H1 (cell line): ENCODE measurements at regions of chr7 and their contacts with region 1.

Region 1: DNA sequence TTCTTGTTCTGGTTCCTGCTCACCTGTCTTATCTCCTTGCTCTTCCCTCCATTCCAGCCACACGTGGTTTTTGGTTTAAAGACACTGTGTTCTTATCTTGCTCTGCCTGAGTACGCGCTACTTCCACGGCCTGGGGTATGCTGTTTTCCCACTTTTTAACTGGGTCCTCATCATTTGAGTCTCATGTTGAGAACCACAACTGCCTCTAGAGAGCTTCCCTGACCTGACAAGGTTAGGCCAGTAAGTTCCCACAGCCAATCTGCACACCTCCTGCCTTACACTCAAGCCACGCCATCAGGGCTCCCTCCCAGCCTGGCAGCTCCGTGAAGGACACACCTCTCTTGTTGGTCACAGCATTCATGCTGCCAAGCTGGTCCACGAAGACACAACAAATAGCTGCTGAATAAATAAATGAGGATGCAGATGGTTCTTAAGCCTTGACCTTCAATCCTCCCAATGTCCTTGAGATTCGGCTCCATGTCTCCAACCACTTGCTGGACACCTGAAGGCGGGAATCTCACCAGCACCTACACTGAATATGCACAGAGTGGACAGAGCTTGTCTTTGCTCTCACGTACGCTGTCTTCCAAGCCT is 201.7 kb upstream of the KLF14 start:
- DNase-seq: no peak
- H3K4me3 ChIP-seq: no peak overlapping the region
- H3K27ac ChIP-seq: no peak overlapping the region
- H3K4me1 ChIP-seq: peaks cover 0 to 8% (median 0%) of the 10 kb centered on the region in 4 experiments; a peak in 2 of 7 replicates
- H3K27me3 ChIP-seq: no peaks in the 10 kb centered on the region
- CTCF ChIP-seq: no peak
- EP300 ChIP-seq: no peak
- POLR2A ChIP-seq: no peak
- RAD21 ChIP-seq: no peak

Region 2: DNA sequence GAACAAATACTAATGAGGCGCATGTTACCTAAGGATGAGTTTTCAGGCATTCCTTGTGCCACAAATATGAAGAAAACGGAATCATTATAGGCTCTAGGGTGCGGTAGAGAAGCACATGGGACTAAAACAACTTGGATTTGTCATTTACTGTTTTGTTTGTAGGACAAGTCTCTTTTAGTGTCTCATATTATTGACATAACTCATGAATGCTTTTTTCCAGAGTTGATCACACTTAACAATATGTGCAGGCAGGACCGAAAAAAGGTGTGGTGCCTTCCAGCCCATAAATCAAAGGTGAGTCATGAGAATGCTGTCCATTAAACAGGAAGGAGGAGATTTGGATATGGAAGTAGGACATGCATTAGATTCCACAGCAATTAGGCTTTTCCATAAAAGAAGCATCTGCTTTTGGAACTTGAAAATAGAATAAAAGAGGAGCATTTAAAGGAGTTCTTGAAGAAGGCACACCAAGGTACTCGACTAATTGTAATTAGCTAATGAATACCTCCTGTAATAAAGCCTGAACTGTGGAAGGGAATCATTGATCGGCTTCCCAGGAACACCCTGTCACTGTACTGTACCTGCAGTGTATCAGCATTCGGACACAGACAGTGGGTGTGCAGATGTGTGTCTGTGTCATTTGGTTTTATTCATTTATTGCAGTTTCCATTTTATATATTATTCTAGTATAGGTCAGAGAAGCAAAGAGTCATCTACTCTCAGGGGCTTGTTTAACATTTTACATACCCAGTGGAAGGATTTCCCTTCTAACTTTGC is 82.0 kb before region 1 on chr7:
- CTCF ChIA-PET with region 1: no interaction called
- POLR2A ChIA-PET with region 1: no interaction called
- DNase-seq: no peak
- H3K4me3 ChIP-seq: no peak overlapping the region
- H3K27ac ChIP-seq: no peak overlapping the region
- H3K4me1 ChIP-seq: no peaks in the 10 kb centered on the region
- H3K27me3 ChIP-seq: no peaks in the 10 kb centered on the region
- CTCF ChIP-seq: no peak
- EP300 ChIP-seq: no peak
- POLR2A ChIP-seq: no peak
- RAD21 ChIP-seq: no peak

Region 3: GRCh38 chr7:130882396-130882795 is 53.3 kb before region 1 on chr7:
- CTCF ChIA-PET with region 1: no interaction called
- POLR2A ChIA-PET with region 1: no interaction called
- DNase-seq: peak in 1 of 2 experiments; percentile 11
- H3K4me3 ChIP-seq: no peak overlapping the region
- H3K27ac ChIP-seq: no peak overlapping the region
- H3K4me1 ChIP-seq: peaks cover 0 to 13% (median 3%) of the 10 kb centered on the region in 4 experiments; a peak in 3 of 7 replicates
- H3K27me3 ChIP-seq: no peaks in the 10 kb centered on the region
- CTCF ChIP-seq: no peak
- EP300 ChIP-seq: no peak
- POLR2A ChIP-seq: no peak
- RAD21 ChIP-seq: no peak

Region 4: DNA sequence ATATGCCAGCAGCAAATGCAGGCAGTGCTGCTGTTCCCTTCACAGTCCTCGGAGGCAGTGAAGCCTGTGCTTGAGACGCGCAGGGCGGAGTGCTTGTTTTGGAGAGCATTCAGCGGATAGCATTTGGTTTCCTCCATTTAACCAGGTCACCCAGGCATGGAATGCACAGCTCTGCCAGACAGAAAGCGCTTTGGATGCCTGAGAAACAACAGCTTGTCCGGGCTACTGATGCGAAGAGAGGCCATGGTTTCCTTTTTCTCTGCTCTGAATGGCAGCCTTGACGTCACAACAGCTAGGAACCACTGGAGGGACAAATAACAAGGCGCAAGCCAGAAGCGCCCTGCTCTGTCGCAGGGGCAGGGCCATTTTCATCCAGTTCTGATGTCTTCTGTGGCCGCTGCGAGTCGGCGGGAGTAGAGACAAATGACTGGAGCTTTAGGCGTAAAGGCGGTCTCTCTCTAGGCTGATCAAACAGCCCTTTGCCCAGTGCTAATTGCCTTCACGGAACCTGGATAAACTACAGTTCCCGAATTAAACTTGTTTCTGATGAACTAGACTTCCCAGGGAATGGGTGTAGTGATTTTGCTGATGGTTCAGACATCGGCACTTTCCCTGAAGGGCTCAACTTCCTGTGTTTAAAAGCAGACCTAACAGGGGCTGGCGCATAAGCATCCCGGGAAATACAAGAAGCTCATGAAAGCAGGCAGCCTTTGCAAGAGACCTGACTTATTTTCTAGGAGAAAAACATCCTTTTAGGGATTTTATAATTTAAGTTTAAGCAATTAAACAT is 14.1 kb before region 1 on chr7:
- CTCF ChIA-PET with region 1: interaction called, 11 read pairs
- POLR2A ChIA-PET with region 1: interaction called, 4 read pairs
- DNase-seq: peak in 1 of 2 experiments; percentile 48
- H3K4me3 ChIP-seq: no peak overlapping the region
- H3K27ac ChIP-seq: peak overlapping the region; percentile 44
- H3K4me1 ChIP-seq: peaks cover 0 to 6% (median 4%) of the 10 kb centered on the region in 4 experiments; a peak in 4 of 7 replicates
- H3K27me3 ChIP-seq: no peaks in the 10 kb centered on the region
- CTCF ChIP-seq: 0 out of 4 replicates have a peak, but pooled peaks of 1 of the 3 experiments have one; percentile 8
- EP300 ChIP-seq: no peak
- POLR2A ChIP-seq: no peak
- RAD21 ChIP-seq: 0 out of 4 replicates have a peak, but pooled peaks of 1 of the 2 experiments have one; percentile 8